A549 (cell line): ENCODE measurements at regions of chr1 and their contacts with region 1.

Region 1: DNA sequence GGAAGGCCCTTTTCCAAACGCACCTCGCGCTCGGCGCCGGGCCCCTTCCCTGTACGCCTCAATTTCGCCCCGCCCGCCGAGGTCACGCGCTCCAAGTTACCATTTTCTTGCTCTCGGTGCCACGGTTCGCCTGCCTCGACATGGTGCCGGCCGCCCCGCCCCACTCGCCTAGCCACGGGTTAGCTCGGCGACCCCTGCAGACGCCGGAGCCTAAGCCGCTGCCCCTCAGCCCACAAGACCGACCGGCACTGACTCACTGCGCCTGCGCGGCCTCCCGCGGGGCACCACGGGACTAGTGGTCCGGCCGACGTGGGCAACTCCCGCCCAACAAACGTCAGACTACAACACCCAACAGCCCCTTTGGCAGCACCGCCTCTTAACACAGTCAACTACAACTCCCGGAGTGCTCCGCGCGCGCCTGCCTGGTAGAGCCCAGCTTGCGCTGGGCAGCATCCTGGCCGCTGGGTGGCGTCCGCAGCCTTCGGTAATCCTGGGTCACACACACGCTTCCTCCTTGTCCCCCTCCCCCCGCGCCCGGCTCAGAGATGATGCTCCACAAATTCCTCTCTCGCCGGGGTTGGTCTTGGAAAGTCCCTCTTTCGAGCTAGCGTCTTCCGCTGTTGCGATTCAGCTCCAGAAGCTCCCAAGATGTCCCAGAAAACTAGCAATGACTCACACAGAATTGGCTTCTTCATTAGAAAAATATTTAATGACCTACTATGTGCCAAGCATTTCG is at the start of gene TRAPPC3:
- DNase-seq: peak; percentile 95 to 99
- ATAC-seq: peak; percentile 87 to 91
- H3K4me3 ChIP-seq: peak within 1 kb of the TSS; percentile 59
- H3K27ac ChIP-seq: peak within 1 kb of the TSS; percentile 98
- H3K4me1 ChIP-seq: peaks cover 31% of the 10 kb centered on the region
- CTCF ChIP-seq: peak; percentile 86
- EP300 ChIP-seq: 0 out of 5 replicates have a peak, but pooled peaks of 1 of the 2 experiments have one; percentile 27
- POLR2A ChIP-seq: peak; percentile 82
- RAD21 ChIP-seq: peak; percentile 94 to 99
- polyA plus RNA-seq, gene TRAPPC3: 62.2 and 67.0 TPM in 2 replicates

Region 2: GRCh38 chr1:36070349-36070748 is 79.1 kb before region 1 on chr1:
- CTCF ChIA-PET with region 1: no interaction called
- POLR2A ChIA-PET with region 1: no interaction called
- DNase-seq: no peak
- ATAC-seq: no peak
- H3K4me3 ChIP-seq: no peak overlapping the region
- H3K27ac ChIP-seq: no peak overlapping the region
- H3K4me1 ChIP-seq: no peaks in the 10 kb centered on the region
- CTCF ChIP-seq: no peak
- EP300 ChIP-seq: no peak
- POLR2A ChIP-seq: no peak
- RAD21 ChIP-seq: no peak

Region 3: DNA sequence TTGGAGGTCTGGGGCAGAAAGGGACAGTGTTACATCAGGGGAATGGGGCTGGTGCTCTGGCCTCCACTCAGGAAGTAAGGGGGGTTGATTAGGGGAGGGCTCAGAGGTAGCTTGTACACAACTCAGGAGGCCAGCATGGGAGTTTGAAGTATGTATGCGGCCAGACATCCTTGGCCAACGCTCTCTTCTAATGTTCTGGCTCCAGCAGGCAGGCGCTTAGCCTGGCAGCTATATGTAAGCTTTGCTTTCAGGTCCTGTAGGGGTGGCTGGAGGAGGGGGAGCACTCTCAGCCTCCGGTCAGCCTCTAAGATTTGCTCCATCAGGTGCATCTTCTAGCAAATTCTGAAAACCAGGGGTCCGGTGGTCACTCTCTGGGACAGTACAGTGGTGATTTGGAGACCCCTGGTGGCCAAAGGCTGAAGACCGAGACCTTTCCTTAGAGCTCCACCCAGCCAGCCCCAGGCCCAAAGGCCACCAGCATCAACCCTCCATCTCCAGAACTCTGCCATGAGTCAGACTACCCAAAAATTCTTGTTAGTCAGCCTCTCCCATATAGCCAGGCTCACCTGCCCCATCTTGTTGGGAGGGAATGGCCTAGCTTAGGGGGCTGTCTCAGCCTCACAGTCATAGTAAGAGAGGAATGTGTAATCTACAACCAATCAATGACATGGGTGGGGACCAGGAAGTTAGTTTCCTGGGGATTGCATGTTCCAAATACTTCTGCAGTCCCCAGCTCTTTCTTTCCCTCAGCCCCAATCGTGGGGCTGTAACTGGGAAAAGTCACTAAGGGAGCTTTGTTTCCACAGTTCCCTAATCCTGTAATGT is 14.7 kb before region 1 on chr1:
- CTCF ChIA-PET with region 1: interaction called, 20 read pairs
- POLR2A ChIA-PET with region 1: no interaction called
- DNase-seq: peak; percentile 34 to 68
- ATAC-seq: peak; percentile 77 to 94
- H3K4me3 ChIP-seq: no peak overlapping the region
- H3K27ac ChIP-seq: no peak overlapping the region
- H3K4me1 ChIP-seq: peaks cover 6% of the 10 kb centered on the region
- CTCF ChIP-seq: peak; percentile 58
- EP300 ChIP-seq: no peak
- POLR2A ChIP-seq: no peak
- RAD21 ChIP-seq: peak; percentile 53 to 66; a peak in 4 of 5 replicates

Region 4: GRCh38 chr1:36175137-36176095 is 26.0 kb after region 1 on chr1:
- CTCF ChIA-PET with region 1: interaction called, 14 read pairs
- POLR2A ChIA-PET with region 1: no interaction called
- DNase-seq: no peak
- ATAC-seq: peak in 1 of 2 experiments; percentile 15; a peak in 2 of 6 replicates
- H3K4me3 ChIP-seq: no peak overlapping the region
- H3K27ac ChIP-seq: 0 out of 6 replicates have a peak overlapping the region, but pooled peaks of 1 of the 2 experiments have one; percentile 26
- H3K4me1 ChIP-seq: peaks cover 18% of the 10 kb centered on the region
- CTCF ChIP-seq: no peak
- EP300 ChIP-seq: no peak
- POLR2A ChIP-seq: no peak
- RAD21 ChIP-seq: no peak

Region 5: DNA sequence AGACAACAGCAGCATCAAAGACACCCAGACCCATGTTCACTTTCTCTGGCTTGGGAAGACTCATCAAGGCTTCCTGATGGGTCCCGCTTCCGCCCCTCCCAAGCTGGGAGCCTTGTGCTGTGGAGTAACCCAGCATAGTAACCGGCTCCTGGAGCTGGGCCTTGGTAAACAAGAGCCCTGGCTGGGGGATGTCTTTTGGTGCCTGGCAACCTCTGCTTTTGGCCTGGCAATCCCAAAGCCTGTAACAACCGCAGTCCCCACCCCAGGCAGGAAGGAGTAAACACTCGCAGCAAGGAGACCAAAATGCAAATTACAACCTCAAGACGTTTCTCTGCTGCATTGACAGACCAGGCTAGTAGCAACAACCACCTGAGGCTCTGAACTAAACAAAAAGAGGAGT is 57.9 kb after region 1 on chr1:
- CTCF ChIA-PET with region 1: interaction called, 13 read pairs
- POLR2A ChIA-PET with region 1: no interaction called
- DNase-seq: peak in 1 of 2 experiments; percentile 57
- ATAC-seq: peak in 1 of 2 experiments; percentile 34; a peak in 3 of 6 replicates
- H3K4me3 ChIP-seq: no peak overlapping the region
- H3K27ac ChIP-seq: peak overlapping the region; percentile 60 to 74; a peak in 4 of 6 replicates
- H3K4me1 ChIP-seq: peaks cover 47% of the 10 kb centered on the region
- CTCF ChIP-seq: no peak
- EP300 ChIP-seq: no peak
- POLR2A ChIP-seq: no peak
- RAD21 ChIP-seq: no peak

Region 6: GRCh38 chr1:36223993-36224536 is 74.7 kb after region 1 on chr1 and contains the start of gene THRAP3:
- CTCF ChIA-PET with region 1: interaction called, 14 read pairs
- POLR2A ChIA-PET with region 1: interaction called, 23 read pairs
- DNase-seq: peak; percentile 89 to 99
- ATAC-seq: peak; percentile 96 to 97
- H3K4me3 ChIP-seq: peak within 1 kb of the TSS; percentile 65
- H3K27ac ChIP-seq: peak within 1 kb of the TSS; percentile 93 to 98
- H3K4me1 ChIP-seq: peaks cover 19% of the 10 kb centered on the region
- CTCF ChIP-seq: no peak
- EP300 ChIP-seq: no peak
- POLR2A ChIP-seq: peak; percentile 46
- RAD21 ChIP-seq: no peak; a peak in 1 of 5 replicates
- polyA plus RNA-seq, gene THRAP3: 60.7 and 66.5 TPM in 2 replicates

Region 7: GRCh38 chr1:36285448-36286101 is 136.2 kb after region 1 on chr1:
- CTCF ChIA-PET with region 1: interaction called, 49 read pairs
- POLR2A ChIA-PET with region 1: interaction called, 3 read pairs
- DNase-seq: peak; percentile 73 to 84
- ATAC-seq: peak; percentile 92 to 96
- H3K4me3 ChIP-seq: no peak overlapping the region
- H3K27ac ChIP-seq: peak overlapping the region in 1 of 2 experiments; percentile 43; a peak in 2 of 6 replicates
- H3K4me1 ChIP-seq: peaks cover 28% of the 10 kb centered on the region; the same call in 2 of the 3 replicates
- CTCF ChIP-seq: peak; percentile 81
- EP300 ChIP-seq: no peak
- POLR2A ChIP-seq: no peak
- RAD21 ChIP-seq: peak; percentile 77 to 85

Region 8: DNA sequence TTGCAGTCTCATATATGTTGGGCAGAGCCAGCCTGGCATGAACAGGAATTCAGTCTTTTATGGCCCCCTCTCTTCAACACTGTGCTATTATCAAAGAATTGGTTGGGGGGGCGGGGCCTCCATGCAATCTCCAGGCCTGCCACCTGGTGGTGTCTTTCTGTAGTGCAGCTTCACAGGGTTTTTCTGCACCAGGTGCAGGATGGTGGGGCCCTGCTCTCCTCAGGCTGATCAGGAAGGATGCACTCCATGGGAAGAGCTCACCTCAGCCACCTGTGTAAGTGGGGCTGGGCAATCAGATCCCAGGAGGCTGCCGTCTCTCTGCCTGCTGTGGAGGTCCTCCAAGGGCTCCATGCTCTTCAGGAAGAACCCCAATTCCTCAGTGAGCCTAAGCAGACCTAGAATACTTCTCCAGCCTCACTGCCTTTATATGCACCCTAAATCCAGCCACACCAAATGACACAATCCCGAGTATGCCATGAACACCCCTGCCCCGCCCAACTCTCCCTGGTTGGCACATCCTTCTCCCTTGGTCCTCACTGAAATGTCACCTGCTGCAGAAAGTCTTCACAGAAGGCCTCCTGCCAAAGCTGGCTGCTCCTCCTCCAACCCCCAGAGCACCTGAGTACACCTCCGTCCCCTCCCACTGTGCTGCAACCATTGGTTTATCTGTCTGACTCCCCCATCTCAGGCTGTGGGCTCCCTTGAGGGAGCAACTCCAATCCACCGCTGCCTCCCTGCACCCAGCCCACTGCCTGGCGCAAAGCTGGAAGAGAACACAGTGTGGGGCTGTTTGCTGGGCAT is 219.9 kb after region 1 on chr1:
- CTCF ChIA-PET with region 1: interaction called, 14 read pairs
- POLR2A ChIA-PET with region 1: no interaction called
- DNase-seq: peak; percentile 52 to 85
- ATAC-seq: peak; percentile 55 to 69; a peak in 5 of 6 replicates
- H3K4me3 ChIP-seq: no peak overlapping the region
- H3K27ac ChIP-seq: peak overlapping the region in 1 of 2 experiments; percentile 61; a peak in 3 of 6 replicates
- H3K4me1 ChIP-seq: peaks cover 38% of the 10 kb centered on the region
- CTCF ChIP-seq: peak; percentile 65
- EP300 ChIP-seq: no peak
- POLR2A ChIP-seq: no peak
- RAD21 ChIP-seq: peak; percentile 59 to 68